Breast epithelium (tissue), 4 donors: ENCODE measurements at regions of chr12 and their contacts with region 1.

Region 1: GRCh38 chr12:68559984-68560850 is 50.5 kb upstream of the RAP1B start:
- DNase-seq: no peak
- H3K4me3 ChIP-seq: no peak overlapping the region
- H3K27ac ChIP-seq: peak overlapping the region in 1 of 2 donors; percentile 32
- H3K4me1 ChIP-seq: no peaks in the 10 kb centered on the region
- H3K27me3 ChIP-seq: no peaks in the 10 kb centered on the region
- CTCF ChIP-seq: no peak
- POLR2A ChIP-seq: no peak

Region 2: DNA sequence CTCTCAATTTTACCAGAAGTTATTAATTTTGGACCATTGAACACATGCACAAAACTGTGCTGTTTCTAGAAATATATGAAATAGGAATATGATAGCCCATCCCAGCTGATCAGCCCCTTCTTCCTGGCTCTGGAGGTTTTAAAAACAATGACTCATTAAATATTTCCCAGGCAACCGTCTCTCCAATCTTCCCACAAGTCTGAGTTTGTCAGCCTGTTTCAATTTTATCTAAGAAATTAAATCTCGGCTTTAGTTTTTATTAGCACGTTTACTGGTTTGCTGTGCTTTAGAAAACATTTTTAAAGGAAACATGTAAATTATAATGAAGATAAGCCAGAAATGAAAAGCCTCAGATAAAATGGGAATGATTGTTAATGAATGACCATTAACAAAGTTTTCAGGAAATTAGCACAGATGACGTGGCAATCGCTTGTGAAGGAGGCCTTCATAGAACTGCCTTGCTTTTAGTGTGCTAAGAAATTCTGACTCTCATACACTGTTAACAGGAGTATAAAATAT is 38.8 kb before region 1 on chr12:
- intact Hi-C with region 1: loop called (anchors 2 kb)
- DNase-seq: no peak
- H3K4me3 ChIP-seq: no peak overlapping the region
- H3K27ac ChIP-seq: peak overlapping the region; percentile 43 to 72
- H3K4me1 ChIP-seq: no peaks in the 10 kb centered on the region
- H3K27me3 ChIP-seq: no peaks in the 10 kb centered on the region
- CTCF ChIP-seq: no peak
- POLR2A ChIP-seq: no peak